RWPE1 (cell line): ENCODE measurements at regions of chr7 and their contacts with region 1.

Region 1: GRCh38 chr7:35816514-35816913 is 15.7 kb downstream of the SEPTIN7 start:
- DNase-seq: peak; percentile 23
- H3K27ac ChIP-seq: no peak overlapping the region
- CTCF ChIP-seq: no peak

Region 2: GRCh38 chr7:35781200-35781701 is 35.3 kb before region 1 on chr7:
- CTCF ChIA-PET with region 1: no interaction called
- POLR2A ChIA-PET with region 1: no interaction called
- DNase-seq: no peak
- H3K27ac ChIP-seq: no peak overlapping the region
- CTCF ChIP-seq: no peak

Region 3: DNA sequence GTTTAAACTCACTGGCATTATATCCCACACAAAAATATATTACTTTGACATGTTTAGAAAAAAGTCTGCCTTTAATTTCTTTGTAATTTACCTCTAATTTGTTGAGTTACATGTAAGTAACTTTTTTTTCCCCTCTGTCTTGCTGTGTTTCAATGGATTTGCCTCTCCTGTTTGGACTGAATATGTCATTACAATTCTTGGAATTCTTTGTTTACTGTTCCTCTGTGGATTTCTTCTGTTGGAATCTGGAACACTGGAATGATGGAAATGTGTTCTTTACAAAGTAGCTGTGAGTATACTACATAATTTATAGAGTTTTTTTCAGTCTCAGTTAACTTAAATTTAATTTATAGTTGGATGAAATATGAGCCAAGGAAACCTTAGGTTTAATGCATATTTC is 14.7 kb after region 1 on chr7:
- CTCF ChIA-PET with region 1: no interaction called
- POLR2A ChIA-PET with region 1: no interaction called
- DNase-seq: no peak
- H3K27ac ChIP-seq: no peak overlapping the region
- CTCF ChIP-seq: no peak

Region 4: DNA sequence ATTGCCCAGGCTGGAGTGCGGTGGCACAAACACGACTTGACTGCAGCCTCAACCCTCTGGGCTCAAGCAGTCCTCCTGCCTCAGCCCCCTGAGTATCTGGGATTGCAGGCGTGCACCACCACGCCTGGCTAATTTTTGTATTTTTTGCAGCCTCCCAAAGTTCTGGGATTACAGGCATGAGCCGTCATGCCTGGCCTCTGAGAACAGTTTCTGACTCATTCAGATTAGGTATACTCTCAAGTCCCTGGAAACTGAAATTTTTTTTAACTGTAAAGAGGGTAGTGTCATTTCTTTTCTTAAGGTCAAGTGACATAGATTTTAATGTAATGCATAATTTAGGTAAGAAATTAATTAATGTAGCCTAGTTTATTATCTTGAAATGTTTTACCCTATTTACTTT is 89.0 kb after region 1 on chr7:
- CTCF ChIA-PET with region 1: interaction called, 10 read pairs
- POLR2A ChIA-PET with region 1: no interaction called
- DNase-seq: peak; percentile 4
- H3K27ac ChIP-seq: peak overlapping the region; percentile 68
- CTCF ChIP-seq: no peak

Region 5: DNA sequence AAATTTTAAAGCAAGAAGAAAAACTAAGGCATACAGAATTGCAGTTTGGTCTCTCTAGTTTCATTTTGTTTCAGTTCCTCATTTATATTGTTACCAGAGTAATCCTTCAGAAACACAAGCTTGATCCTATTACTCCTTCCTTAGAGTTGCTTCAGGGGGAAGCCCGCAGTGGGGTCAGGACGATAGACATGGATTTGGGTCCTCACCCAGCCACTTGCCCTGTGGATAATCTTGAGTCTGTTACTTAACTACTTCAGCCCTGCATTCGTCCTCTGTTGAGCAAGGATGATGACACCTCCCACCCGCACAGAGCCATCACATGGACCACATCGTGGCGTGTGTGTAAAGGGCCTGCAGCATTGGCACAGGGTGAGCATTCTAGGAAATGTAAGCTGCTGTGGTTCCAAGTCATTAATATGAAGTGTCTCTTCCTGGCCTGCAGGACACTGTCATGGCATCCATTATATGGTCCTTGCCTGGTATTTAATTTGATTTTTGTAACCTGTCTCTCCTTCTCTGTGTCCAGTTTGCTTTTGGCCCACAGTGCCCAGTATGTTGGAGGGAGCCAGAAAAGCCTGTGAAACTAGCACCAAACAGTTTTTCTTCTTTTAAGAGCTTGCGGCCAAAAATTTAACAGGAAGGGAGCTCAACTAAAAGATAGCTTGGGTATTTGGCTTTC is 447.7 kb after region 1 on chr7:
- CTCF ChIA-PET with region 1: no interaction called
- POLR2A ChIA-PET with region 1: no interaction called
- DNase-seq: no peak
- H3K27ac ChIP-seq: no peak overlapping the region
- CTCF ChIP-seq: no peak